Lower leg skin (tissue), 4 donors: ENCODE measurements at regions of chr10 and their contacts with region 1.

Region 1: GRCh38 chr10:91251430-91252056 is 31.1 kb downstream of the PCGF5 start:
- DNase-seq: peak in 1 of 2 donors; percentile 44
- H3K4me3 ChIP-seq: no peak overlapping the region
- CTCF ChIP-seq: peak in 1 of 3 donors; percentile 81
- POLR2A ChIP-seq: no peak

Region 2: GRCh38 chr10:90912174-90912573 is 339.4 kb before region 1 on chr10:
- intact Hi-C with region 1: loop called (anchors 10 kb)
- DNase-seq: no peak
- H3K4me3 ChIP-seq: no peak overlapping the region
- CTCF ChIP-seq: no peak
- POLR2A ChIP-seq: no peak

Region 3: DNA sequence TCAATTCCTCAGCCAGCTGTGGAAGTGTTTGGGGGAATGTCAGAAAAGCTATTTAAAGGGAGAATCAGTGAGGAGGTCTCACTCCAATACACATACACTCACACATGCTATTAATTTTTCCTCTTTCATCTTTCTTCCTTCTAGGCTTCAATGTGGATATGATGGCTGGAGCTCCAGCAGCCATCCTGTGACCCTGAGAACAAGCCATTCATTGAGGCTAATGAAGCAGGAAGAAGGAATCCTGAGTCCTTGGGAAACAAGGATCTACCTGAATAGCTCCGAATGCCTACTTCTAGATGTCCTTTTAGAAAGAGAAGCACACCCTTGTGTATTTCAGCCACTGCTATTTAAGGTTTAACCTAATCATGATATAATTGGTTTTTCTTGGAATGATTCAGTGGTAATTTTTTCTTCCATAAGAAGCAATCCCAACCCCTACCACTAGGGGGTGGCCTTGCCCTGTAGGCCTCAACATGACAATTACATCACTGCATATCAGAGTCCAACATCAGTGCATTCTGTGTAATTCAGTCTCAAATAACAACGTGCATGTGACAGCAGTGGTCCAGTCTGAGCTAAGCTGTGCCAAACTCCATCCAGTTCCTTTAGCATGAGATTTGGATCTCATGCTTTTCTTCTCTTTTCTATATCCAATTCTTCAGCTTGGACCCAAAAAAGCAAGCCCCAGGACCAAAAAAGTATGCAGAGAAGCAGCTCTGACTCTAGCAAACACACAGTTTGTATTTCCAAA is 245.4 kb before region 1 on chr10:
- intact Hi-C with region 1: loop called (anchors 10 kb)
- DNase-seq: peak in 1 of 2 donors; percentile 45
- H3K4me3 ChIP-seq: no peak overlapping the region
- CTCF ChIP-seq: peak in 1 of 3 donors; percentile 82
- POLR2A ChIP-seq: no peak

Region 4: DNA sequence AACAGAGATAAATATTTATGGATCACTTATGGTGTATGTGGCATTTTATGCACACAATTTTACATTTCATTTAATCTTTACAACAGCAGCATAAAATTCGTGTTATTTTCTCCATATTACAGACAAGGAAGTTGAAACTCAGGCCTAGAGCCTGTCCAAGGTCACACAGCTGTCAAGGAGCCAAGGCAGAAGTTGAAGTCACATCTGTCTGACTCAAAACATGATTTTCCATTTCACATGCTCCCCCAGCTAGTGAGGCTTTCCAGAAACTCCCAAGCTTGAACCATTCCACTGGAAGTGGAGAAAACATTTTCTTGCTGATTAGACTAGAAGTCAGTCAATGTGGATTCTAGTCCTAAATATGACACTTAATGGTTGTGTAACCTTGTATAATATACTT is 269.1 kb after region 1 on chr10:
- intact Hi-C with region 1: no loop called
- DNase-seq: peak in 1 of 2 donors; percentile 62
- H3K4me3 ChIP-seq: no peak overlapping the region
- CTCF ChIP-seq: no peak
- POLR2A ChIP-seq: no peak